Dorsolateral prefrontal cortex (tissue), 120 donors: ENCODE measurements at regions of chr7 and their contacts with region 1.

Region 1: GRCh38 chr7:80294346-80294745 is 159.7 kb downstream of the GNAI1 start:
- DNase-seq: no peak
- H3K4me3 ChIP-seq: no peak overlapping the region
- H3K27ac ChIP-seq: no peak overlapping the region
- H3K27me3 ChIP-seq: no peaks in the 10 kb centered on the region
- CTCF ChIP-seq: no peak

Region 2: GRCh38 chr7:80053124-80053523 is 241.2 kb before region 1 on chr7:
- intact Hi-C with region 1: loop called (anchors 2 to 10 kb)
- DNase-seq: no peak
- H3K4me3 ChIP-seq: no peak overlapping the region
- H3K27ac ChIP-seq: no peak overlapping the region
- H3K27me3 ChIP-seq: no peaks in the 10 kb centered on the region
- CTCF ChIP-seq: no peak

Region 3: GRCh38 chr7:80330434-80330833 is 36.1 kb after region 1 on chr7:
- intact Hi-C with region 1: no loop called
- DNase-seq: no peak
- H3K4me3 ChIP-seq: no peak overlapping the region
- H3K27ac ChIP-seq: no peak overlapping the region
- H3K27me3 ChIP-seq: no peaks in the 10 kb centered on the region
- CTCF ChIP-seq: no peak